ENCODE measurements at regions of chr11 and their contacts with region 1.

Region 1: GRCh38 chr11:81644239-81644840 is 1089.3 kb downstream of the FAM181B start:
- DNase-seq: no peak
- H3K4me3 ChIP-seq: no peak overlapping the region
- H3K27ac ChIP-seq: no peak overlapping the region
- H3K4me1 ChIP-seq: no peaks in the 10 kb centered on the region
- H3K27me3 ChIP-seq: no peaks in the 10 kb centered on the region
- CTCF ChIP-seq: peak; percentile 53 to 68 (median 60)
- POLR2A ChIP-seq: no peak

Region 2: DNA sequence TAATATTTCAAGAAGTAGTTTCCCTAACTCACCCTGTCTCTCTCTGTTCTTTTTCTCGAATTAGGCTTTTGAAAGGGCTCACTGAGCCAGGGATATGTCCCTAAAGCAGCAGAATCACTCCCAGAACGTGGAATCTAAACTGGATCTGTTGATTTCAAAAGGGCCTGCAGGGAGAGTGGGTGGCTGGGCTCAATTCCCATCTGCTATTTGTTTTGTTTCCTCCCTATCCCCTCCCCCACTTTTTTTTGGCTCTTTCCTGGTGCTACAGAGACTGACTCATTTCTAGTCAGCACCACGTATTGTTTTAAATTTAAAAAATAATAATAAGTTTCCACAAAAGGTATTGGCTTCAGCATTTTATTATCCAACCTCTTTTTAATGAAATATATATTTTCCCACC is 127.8 kb after region 1 on chr11:
- intact Hi-C with region 1: no loop called
- DNase-seq: no peak
- H3K4me3 ChIP-seq: no peak overlapping the region
- H3K27ac ChIP-seq: no peak overlapping the region
- H3K4me1 ChIP-seq: no peaks in the 10 kb centered on the region
- H3K27me3 ChIP-seq: no peaks in the 10 kb centered on the region
- CTCF ChIP-seq: no peak
- POLR2A ChIP-seq: no peak

Region 3: GRCh38 chr11:82698576-82699352 is 1054.4 kb after region 1 on chr11:
- intact Hi-C with region 1: loop called (anchors 10 kb)
- DNase-seq: no peak
- H3K4me3 ChIP-seq: no peak overlapping the region
- H3K27ac ChIP-seq: no peak overlapping the region
- H3K4me1 ChIP-seq: no peaks in the 10 kb centered on the region
- H3K27me3 ChIP-seq: no peaks in the 10 kb centered on the region
- CTCF ChIP-seq: no peak
- POLR2A ChIP-seq: no peak